ENCODE measurements at regions of chr15 and their contacts with region 1.

Region 1: DNA sequence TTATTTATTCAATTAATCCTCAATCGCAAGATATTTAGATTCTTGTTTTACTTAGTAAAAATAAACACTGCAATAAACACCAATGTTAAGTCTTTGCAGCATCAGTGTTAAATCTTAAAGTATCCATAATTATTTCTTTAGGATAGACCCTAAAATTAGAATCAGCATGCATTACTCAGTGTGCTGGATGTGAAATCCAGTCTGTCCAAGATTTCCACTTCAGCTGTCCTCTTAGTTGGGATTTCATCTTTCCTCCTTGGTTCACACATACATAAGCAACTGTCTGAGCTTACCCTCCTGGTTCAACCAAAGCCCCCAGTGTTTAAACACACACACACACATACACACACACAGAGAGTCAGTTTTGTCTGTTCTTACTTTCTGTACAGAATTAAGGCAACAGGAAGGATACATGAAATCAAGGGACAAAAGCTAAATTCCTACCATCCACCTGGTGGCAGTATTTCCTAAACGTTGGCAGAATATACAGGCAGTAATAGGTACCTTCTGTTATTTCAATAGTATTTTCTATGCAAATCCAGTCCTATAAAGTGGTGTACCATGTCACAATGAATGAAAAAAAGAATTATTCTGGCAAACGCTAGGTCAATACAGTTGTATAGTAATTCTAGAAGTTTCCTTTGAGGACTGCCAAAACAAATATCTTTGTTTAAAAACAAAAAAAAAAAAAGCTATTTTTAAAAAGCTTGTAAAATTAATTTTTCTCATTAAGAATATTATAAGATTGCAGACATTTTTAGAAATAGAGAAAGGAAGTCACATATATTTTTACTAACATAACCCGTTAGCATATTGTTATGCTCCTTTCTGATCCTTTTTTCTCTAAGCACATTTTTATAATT is 27.3 kb upstream of the DMXL2 start:
- DNase-seq: no peak
- ATAC-seq: peak; percentile 93
- H3K4me3 ChIP-seq: no peak overlapping the region
- H3K27ac ChIP-seq: no peak overlapping the region
- H3K4me1 ChIP-seq: no peaks in the 10 kb centered on the region
- H3K27me3 ChIP-seq: no peaks in the 10 kb centered on the region
- CTCF ChIP-seq: peak; percentile 81

Region 2: DNA sequence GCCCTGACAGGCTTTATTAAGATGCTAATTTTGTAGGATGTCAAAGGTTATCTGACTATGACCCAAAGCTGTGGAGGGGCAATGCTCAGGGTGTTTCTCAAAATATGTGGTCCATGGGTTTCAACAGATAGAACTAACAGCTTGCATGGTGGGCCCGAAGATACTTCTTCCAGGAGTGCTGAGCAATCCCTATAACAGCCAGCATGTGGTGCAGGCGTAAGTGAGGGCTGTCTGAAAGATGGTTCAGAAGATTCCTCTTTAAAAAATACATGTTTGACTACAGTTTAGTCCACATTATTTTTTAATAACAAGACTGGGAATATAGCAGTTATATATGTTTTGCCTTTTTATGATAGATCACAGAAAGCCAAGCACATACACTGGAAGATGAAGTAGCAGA is 39.0 kb after region 1 on chr15:
- intact Hi-C with region 1: no loop called
- DNase-seq: no peak
- ATAC-seq: no peak
- H3K4me3 ChIP-seq: no peak overlapping the region
- H3K27ac ChIP-seq: no peak overlapping the region
- H3K4me1 ChIP-seq: no peaks in the 10 kb centered on the region
- H3K27me3 ChIP-seq: peaks cover 14% of the 10 kb centered on the region
- CTCF ChIP-seq: peak; percentile 9

Region 3: DNA sequence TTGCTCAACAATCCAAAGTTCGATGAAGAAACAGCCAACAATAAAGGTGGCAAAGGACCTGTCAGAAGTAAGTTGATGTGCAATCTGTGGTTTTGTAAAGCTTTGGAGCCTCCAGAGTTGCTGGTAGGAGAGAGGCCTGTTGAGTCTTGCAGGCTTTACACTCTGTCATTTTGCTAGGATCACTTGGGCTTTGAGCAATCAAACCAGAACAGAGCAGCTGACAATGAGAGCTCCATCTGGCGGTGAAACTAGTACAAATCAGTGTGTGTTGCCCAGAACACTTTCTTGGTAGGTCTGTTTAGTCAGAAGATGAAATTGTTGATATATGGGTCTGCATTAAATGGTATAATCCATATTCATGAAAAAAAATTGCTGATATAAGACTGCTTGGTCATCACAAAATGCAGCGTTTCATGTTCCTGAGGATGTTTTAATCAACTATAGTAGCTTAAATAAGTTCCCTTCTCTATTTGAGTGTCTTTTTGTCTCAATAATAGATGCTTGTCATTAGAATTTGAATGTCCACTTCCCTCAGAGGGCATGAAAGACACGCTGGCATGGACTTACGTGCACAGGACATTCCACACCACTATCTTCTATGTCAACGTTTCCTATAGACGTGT is 127.2 kb after region 1 on chr15:
- intact Hi-C with region 1: loop called (anchors 5 kb)
- DNase-seq: no peak
- ATAC-seq: peak; percentile 96
- H3K4me3 ChIP-seq: no peak overlapping the region
- H3K27ac ChIP-seq: no peak overlapping the region
- H3K4me1 ChIP-seq: peaks cover 10% of the 10 kb centered on the region
- H3K27me3 ChIP-seq: no peaks in the 10 kb centered on the region
- CTCF ChIP-seq: peak; percentile 73